AG04449 (cell line): ENCODE measurements at regions of chr5 and their contacts with region 1.

Region 1: GRCh38 chr5:163437309-163438182 is at the start of gene CCNG1:
- DNase-seq: peak; percentile 70
- H3K4me3 ChIP-seq: peak within 1 kb of the TSS; percentile 90
- CTCF ChIP-seq: no peak

Region 2: DNA sequence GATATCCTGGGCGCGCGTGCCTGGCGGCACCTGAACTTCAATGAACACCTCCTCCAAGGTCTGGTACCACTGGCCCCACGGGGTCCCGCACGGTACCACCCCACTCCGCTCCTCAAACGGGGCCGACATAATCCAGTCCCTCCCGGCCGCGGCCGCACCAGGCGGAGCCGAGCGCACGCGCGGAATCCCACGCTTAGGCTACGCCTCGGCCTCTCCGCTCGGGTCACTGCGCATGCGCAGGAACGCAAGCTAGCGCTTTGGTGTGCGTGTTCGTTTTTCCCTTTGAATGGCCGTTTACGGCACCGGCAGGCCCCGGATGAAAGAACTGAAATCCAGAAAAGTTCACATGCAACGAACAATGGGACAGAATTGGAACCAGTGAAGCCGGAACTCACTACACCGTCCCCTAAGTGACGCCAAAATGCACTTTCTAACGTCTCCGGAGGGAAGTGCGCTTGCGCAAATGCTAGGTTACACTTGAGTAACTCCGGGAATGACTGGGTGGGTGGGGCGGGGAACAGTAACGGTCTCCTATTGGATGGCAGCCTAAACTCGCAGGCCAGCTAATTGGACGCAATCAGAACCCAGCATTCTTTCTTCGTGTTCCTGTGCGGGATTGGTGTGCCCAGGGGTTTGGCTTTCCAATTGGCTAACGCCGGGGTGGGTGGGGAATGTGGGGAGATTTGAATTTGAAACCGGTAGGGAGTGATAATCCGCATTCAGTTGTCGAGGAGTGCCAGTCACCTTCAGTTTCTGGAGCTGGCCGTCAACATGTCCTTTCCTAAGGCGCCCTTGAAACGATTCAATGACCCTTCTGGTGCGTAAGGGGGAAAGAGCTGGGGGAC is 22.6 kb after region 1 on chr5 and contains the starts of genes HMMR and NUDCD2:
- CTCF ChIA-PET with region 1: no interaction called
- POLR2A ChIA-PET with region 1: interaction called, 12 read pairs
- DNase-seq: peak; percentile 94
- H3K4me3 ChIP-seq: peak within 1 kb of the TSS; percentile 80
- CTCF ChIP-seq: no peak